MCF 10A (cell line): ENCODE measurements at regions of chrX and their contacts with region 1.

Region 1: GRCh38 chrX:152958524-152959465 is 35.1 kb downstream of the PNMA5 start:
- DNase-seq: peak; percentile 85
- H3K4me3 Mint-ChIP-seq: peak overlapping the region; percentile 72
- H3K27ac Mint-ChIP-seq: peak overlapping the region; percentile 83
- H3K4me1 Mint-ChIP-seq: peaks cover 4% of the 10 kb centered on the region
- H3K27me3 Mint-ChIP-seq: peaks cover 20% of the 10 kb centered on the region
- CTCF ChIP-seq: peak; percentile 90

Region 2: GRCh38 chrX:152941328-152942106 is 17.3 kb before region 1 on chrX:
- CTCF ChIA-PET with region 1: interaction called, 13 read pairs
- POLR2A ChIA-PET with region 1: interaction called, 10 read pairs
- intact Hi-C with region 1: no loop called
- DNase-seq: peak; percentile 89
- H3K4me3 Mint-ChIP-seq: peak overlapping the region; percentile 82
- H3K27ac Mint-ChIP-seq: peak overlapping the region; percentile 77
- H3K4me1 Mint-ChIP-seq: no peaks in the 10 kb centered on the region
- H3K27me3 Mint-ChIP-seq: no peaks in the 10 kb centered on the region
- CTCF ChIP-seq: peak; percentile 75

Region 3: DNA sequence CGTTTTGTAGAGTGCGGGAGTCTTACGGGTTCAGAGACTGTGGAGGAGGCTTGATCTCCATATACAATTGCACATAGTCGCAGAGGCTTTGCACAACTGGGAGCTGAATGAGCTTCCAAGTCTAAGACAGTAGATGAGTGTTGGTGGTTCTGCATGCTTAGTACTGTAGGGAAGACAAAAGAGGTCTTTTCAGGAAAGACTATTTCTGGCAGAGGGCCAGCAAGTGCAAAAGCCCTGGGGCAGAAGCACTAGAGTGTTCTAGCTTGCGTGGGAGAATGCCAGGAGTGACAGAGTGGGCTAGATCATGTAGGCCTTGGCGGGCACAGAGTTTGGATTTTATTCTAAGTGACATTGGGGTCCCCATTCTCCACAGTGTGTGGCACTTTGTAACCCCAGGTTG is 10.8 kb after region 1 on chrX:
- CTCF ChIA-PET with region 1: interaction called, 13 read pairs
- POLR2A ChIA-PET with region 1: no interaction called
- intact Hi-C with region 1: no loop called
- DNase-seq: no peak
- H3K4me3 Mint-ChIP-seq: no peak overlapping the region
- H3K27ac Mint-ChIP-seq: no peak overlapping the region
- H3K4me1 Mint-ChIP-seq: no peaks in the 10 kb centered on the region
- H3K27me3 Mint-ChIP-seq: no peaks in the 10 kb centered on the region
- CTCF ChIP-seq: no peak

Region 4: DNA sequence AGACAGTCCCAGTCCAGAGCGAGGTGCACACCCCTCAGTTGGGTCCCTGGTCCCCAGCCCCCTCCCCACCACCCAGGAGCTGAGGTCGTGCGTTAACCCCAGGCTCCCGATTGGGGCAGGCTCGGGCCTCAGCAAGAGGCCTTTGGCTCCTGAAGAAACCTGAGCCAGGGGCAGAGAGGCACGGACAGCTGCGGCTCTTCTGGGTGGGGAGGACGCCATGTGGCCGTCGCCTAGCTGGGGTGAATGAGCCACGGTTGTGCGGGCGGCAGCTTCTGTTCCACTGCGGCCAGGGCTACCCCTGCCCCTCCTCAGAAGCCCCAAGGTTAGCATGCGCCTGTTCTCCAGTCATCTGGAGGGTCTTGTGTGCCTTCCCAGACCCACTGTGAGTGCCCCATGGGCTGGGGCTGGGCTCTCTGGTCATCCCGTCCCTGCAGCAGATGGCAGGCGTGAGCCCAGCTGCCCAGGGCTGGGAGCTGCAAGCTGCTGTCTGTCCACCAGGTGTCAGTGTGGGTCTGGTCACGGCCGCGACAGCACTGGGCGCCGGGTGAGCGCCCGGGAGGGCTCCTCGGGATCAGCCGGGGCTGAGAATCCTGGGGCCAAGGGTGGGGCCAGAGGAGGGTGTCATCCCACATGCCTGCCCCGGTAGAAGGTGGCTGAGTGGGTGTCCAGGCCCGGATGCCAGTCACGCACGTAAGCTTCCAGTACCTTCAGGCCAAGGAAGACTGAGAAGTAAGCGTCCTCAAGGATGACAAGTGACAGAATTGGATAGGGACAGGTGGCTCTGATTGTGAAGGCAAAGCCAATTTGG is 580.6 kb after region 1 on chrX:
- CTCF ChIA-PET with region 1: no interaction called
- POLR2A ChIA-PET with region 1: interaction called, 3 read pairs
- intact Hi-C with region 1: loop called (anchors 5 kb)
- DNase-seq: peak; percentile 55
- H3K4me3 Mint-ChIP-seq: no peak overlapping the region
- H3K27ac Mint-ChIP-seq: no peak overlapping the region
- H3K4me1 Mint-ChIP-seq: no peaks in the 10 kb centered on the region
- H3K27me3 Mint-ChIP-seq: no peaks in the 10 kb centered on the region
- CTCF ChIP-seq: peak; percentile 74

Region 5: GRCh38 chrX:154534862-154535670 is 1576.3 kb after region 1 on chrX:
- CTCF ChIA-PET with region 1: interaction called, 3 read pairs
- POLR2A ChIA-PET with region 1: no interaction called
- intact Hi-C with region 1: loop called (anchors 1 kb)
- DNase-seq: peak; percentile 86
- H3K4me3 Mint-ChIP-seq: no peak overlapping the region
- H3K27ac Mint-ChIP-seq: peak overlapping the region; percentile 35
- H3K4me1 Mint-ChIP-seq: no peaks in the 10 kb centered on the region
- H3K27me3 Mint-ChIP-seq: no peaks in the 10 kb centered on the region
- CTCF ChIP-seq: peak; percentile 100